Activated naive CD4-positive, alpha-beta T cell treated with anti-CD3 and anti-CD28 coated beads for 36 hours (primary cell): ENCODE measurements at regions of chr3 and their contacts with region 1.

Region 1: GRCh38 chr3:22117751-22118346 is 366.8 kb upstream of the ZNF385D start:
- DNase-seq: no peak
- H3K4me3 Mint-ChIP-seq: no peak overlapping the region
- H3K27ac Mint-ChIP-seq: no peak overlapping the region
- H3K4me1 Mint-ChIP-seq: no peaks in the 10 kb centered on the region
- H3K27me3 Mint-ChIP-seq: no peaks in the 10 kb centered on the region

Region 2: GRCh38 chr3:20511863-20512505 is 1605.9 kb before region 1 on chr3:
- CTCF ChIA-PET with region 1: no interaction called
- intact Hi-C with region 1: loop called (anchors 5 kb)
- DNase-seq: no peak
- H3K4me3 Mint-ChIP-seq: no peak overlapping the region
- H3K27ac Mint-ChIP-seq: no peak overlapping the region
- H3K4me1 Mint-ChIP-seq: no peaks in the 10 kb centered on the region
- H3K27me3 Mint-ChIP-seq: no peaks in the 10 kb centered on the region

Region 3: GRCh38 chr3:22089284-22089683 is 28.6 kb before region 1 on chr3:
- CTCF ChIA-PET with region 1: interaction called, 11 read pairs
- intact Hi-C with region 1: loop called (anchors 2 kb)
- DNase-seq: peak; percentile 5
- H3K4me3 Mint-ChIP-seq: no peak overlapping the region
- H3K27ac Mint-ChIP-seq: no peak overlapping the region
- H3K4me1 Mint-ChIP-seq: no peaks in the 10 kb centered on the region
- H3K27me3 Mint-ChIP-seq: no peaks in the 10 kb centered on the region